SK-N-SH (cell line): ENCODE measurements at regions of chr7 and their contacts with region 1.

Region 1: GRCh38 chr7:152709287-152710152 is 33.6 kb upstream of the XRCC2 start:
- DNase-seq: no peak
- H3K4me3 ChIP-seq: no peak overlapping the region
- H3K27ac ChIP-seq: no peak overlapping the region
- H3K4me1 ChIP-seq: no peaks in the 10 kb centered on the region
- H3K27me3 ChIP-seq: no peaks in the 10 kb centered on the region
- CTCF ChIP-seq: no peak
- EP300 ChIP-seq: no peak
- RAD21 ChIP-seq: no peak

Region 2: GRCh38 chr7:152158801-152159587 is 550.5 kb before region 1 on chr7:
- CTCF ChIA-PET with region 1: interaction called, 14 read pairs
- POLR2A ChIA-PET with region 1: no interaction called
- DNase-seq: no peak
- H3K4me3 ChIP-seq: no peak overlapping the region
- H3K27ac ChIP-seq: no peak overlapping the region
- H3K4me1 ChIP-seq: peaks cover 0 to 2% of the 10 kb centered on the region in 2 experiments; a peak in 1 of 4 replicates
- H3K27me3 ChIP-seq: no peaks in the 10 kb centered on the region
- CTCF ChIP-seq: no peak
- EP300 ChIP-seq: no peak
- RAD21 ChIP-seq: no peak

Region 3: DNA sequence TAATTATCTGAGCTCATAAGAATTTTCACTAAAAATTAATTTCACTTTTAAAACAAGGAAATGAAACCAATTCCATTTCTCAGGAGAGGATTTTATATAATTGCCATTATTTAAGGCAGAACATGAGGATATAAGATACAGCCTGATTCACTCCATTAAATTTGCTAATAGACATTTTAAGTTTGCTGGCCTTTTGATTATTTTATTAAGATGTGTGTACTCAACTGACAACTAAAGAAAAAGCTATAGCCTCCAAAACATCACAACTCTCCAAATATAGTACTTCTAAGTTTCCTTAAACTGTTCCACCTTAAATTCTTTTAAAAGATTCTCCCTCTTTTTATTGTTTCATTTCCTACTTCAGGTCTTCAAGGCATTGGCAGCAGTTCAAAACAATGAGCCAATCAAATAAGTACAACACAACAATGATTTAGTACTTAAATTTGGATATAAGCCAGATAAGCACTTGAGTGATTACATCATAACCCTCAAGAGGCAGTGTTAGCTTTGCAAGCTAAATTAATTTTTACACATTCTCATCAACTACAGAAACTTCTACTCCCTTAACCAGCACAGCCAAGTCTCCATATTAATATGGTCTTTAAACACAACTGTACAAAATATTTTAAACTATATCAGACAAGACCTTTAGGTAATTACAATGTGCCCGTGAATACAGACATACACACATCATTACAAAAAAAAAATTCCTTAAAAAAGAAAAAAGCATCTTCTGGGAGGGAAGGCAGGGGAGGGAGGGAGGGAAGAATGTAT is 395.5 kb before region 1 on chr7:
- CTCF ChIA-PET with region 1: interaction called, 10 read pairs
- POLR2A ChIA-PET with region 1: no interaction called
- DNase-seq: peak; percentile 55
- H3K4me3 ChIP-seq: no peak overlapping the region; a peak in 1 of 4 replicates
- H3K27ac ChIP-seq: peak overlapping the region; percentile 43 to 48
- H3K4me1 ChIP-seq: peaks cover 0 to 15% of the 10 kb centered on the region in 2 experiments; a peak in 2 of 4 replicates
- H3K27me3 ChIP-seq: no peaks in the 10 kb centered on the region
- CTCF ChIP-seq: no peak
- EP300 ChIP-seq: no peak; a peak in 1 of 4 replicates
- RAD21 ChIP-seq: no peak

Region 4: GRCh38 chr7:152336754-152337368 is 372.7 kb before region 1 on chr7:
- CTCF ChIA-PET with region 1: interaction called, 65 read pairs
- POLR2A ChIA-PET with region 1: no interaction called
- DNase-seq: peak; percentile 51
- H3K4me3 ChIP-seq: no peak overlapping the region
- H3K27ac ChIP-seq: no peak overlapping the region
- H3K4me1 ChIP-seq: peaks cover 0 to 6% of the 10 kb centered on the region in 2 experiments; a peak in 3 of 4 replicates
- H3K27me3 ChIP-seq: no peaks in the 10 kb centered on the region
- CTCF ChIP-seq: peak; percentile 72
- EP300 ChIP-seq: no peak
- RAD21 ChIP-seq: peak; percentile 59

Region 5: DNA sequence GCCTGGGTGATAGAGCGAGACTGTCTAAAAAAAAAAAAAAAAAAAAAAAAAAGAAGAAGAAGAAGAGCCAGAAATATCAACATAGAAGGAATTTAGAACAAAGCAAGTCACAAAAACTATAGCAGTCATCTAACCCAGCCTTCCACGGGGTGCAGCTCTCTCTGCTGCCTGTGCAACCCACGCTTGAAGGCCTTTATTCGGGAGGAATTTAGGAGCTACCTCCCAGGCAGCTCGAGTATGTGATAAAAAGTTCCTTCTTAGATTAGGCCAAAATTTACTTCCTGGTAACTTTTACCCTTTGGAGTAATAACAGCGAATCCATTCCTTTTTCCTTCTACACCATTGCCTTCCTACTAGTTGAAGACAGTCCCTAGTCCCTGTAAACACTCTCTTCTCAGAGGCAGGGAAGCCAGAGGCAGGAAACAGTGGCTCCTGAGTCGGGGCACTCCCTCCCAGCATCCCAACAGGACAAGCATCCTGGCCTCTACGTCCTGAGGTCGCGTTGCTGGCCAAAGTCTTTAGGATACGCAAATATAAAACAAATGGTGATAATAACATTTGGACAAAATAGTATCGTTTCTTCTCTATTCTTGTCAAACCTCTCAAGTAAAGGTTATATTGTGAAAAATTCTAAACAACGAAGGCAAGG is 164.4 kb before region 1 on chr7:
- CTCF ChIA-PET with region 1: no interaction called
- POLR2A ChIA-PET with region 1: no interaction called
- DNase-seq: no peak
- H3K4me3 ChIP-seq: no peak overlapping the region
- H3K27ac ChIP-seq: no peak overlapping the region
- H3K4me1 ChIP-seq: no peaks in the 10 kb centered on the region; a peak in 1 of 4 replicates
- H3K27me3 ChIP-seq: no peaks in the 10 kb centered on the region
- CTCF ChIP-seq: no peak
- EP300 ChIP-seq: no peak
- RAD21 ChIP-seq: no peak

Region 6: DNA sequence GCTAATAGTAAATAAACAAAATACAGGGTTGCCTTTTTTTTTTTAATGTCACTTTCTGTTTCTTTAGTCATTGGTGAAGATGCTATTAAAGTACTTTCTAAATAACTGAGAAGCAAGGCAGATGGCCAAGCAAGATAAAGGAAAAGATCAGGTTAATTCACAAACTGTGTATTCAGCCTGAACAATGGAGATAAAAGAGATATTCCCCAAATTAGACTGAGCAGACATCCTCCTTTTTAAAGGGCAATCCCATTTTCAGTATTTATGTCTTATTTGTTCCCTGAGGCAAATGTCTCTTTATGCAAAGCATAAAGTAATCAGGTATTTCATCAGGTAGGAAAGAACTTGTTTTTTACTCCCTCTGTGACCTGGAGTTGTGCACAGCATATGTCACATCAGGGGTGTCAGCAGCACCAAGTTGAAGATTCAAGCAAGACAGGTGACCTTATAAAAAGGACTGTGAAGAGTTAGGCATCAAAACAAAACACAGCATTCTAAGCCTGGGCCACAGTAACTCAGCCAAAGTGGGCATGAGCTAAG is 10.3 kb before region 1 on chr7:
- CTCF ChIA-PET with region 1: interaction called, 20 read pairs
- POLR2A ChIA-PET with region 1: no interaction called
- DNase-seq: peak; percentile 61
- H3K4me3 ChIP-seq: no peak overlapping the region
- H3K27ac ChIP-seq: peak overlapping the region in 1 of 2 experiments; percentile 54; a peak in 2 of 4 replicates
- H3K4me1 ChIP-seq: peaks cover 0 to 15% of the 10 kb centered on the region in 2 experiments; a peak in 2 of 4 replicates
- H3K27me3 ChIP-seq: no peaks in the 10 kb centered on the region
- CTCF ChIP-seq: no peak
- EP300 ChIP-seq: peak in 1 of 2 experiments; percentile 64; a peak in 1 of 4 replicates
- RAD21 ChIP-seq: peak; percentile 10; the same call in 1 of the 2 replicates